Activated CD4-positive, alpha-beta T cell treated with anti-CD3 and anti-CD28 coated beads for 36 hours (primary cell): ENCODE measurements at regions of chr18 and their contacts with region 1.

Region 1: DNA sequence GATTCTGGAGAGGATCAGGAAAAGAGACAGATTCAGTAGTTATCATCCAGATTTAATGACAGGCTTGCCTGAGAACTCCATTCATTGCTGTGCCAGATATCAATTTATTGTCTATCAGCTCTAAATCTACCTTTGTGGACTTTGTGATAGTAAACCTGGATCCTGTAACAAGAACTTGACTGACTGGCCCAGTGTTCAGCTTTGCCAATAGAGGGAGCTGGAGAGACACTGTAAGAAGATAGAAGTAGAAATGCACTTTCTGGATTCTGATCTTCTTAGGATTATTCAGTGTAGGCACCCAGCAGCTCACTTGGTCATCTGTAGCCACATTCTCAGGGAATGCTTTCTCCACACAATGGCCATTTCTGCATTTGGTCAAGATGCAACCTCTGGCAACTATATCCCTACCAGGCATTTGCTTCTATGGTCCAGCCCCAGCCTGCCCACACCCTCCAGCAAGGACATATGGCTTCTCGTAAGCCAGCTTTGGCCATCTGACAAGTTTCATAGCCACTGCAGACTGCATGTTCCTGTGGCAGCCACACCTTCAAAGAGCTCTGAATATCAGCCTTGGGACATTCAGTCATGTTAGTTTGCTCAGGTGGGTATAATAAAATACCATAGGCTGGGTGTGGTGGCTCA is 6.1 kb upstream of the SERPINB8 start:
- DNase-seq: peak; percentile 65
- ATAC-seq: peak; percentile 81
- H3K4me3 Mint-ChIP-seq: no peak overlapping the region
- H3K27ac Mint-ChIP-seq: no peak overlapping the region
- H3K4me1 Mint-ChIP-seq: peaks cover 7% of the 10 kb centered on the region
- H3K27me3 Mint-ChIP-seq: peaks cover 16% of the 10 kb centered on the region

Region 2: GRCh38 chr18:63994783-63995399 is 31.2 kb after region 1 on chr18:
- CTCF ChIA-PET with region 1: interaction called, 15 read pairs
- POLR2A ChIA-PET with region 1: no interaction called
- intact Hi-C with region 1: no loop called
- DNase-seq: peak; percentile 56
- ATAC-seq: peak; percentile 23
- H3K4me3 Mint-ChIP-seq: no peak overlapping the region
- H3K27ac Mint-ChIP-seq: no peak overlapping the region
- H3K4me1 Mint-ChIP-seq: peaks cover 5% of the 10 kb centered on the region
- H3K27me3 Mint-ChIP-seq: no peaks in the 10 kb centered on the region